ENCODE measurements at regions of chr1 and their contacts with region 1.

Region 1: DNA sequence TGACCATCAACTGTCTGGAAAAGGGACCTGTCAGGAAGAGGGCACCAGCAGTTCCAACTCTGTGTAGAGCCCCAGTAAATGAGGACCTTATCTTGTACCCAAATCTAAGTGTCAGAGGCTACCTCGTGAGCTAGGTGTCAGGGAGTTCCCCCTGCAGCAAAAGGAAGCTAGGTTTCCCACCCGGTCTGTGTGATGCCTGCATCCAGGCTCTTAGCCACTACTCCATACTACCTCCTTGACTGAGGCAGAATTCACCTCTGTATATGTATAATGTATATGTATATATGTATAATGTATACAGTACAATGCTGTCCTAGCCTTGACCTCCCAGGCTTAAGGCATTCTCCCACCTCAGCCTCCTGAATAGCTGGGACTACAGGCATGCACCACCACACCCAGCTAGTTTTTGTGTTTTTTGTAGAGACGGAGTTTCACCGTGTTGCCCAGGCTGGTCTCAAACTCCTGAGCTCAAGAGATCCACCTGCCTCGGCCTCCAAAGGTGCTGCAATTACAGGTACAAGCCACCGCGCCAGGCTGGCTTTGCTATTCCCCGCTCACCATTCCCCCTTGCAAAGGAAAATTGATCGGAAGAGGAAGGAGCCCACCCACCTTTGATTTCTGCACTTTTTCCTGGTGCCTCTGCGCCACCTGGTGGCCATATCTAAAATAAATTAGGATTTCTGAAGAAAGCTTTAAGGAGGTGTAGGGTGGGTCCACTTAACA is 15.7 kb upstream of the LUZP1 start:
- DNase-seq: peak; percentile 34 to 82
- ATAC-seq: peak; percentile 45 to 59 (median 52)
- H3K4me3 ChIP-seq: no peak overlapping the region
- H3K4me3 Mint-ChIP-seq: peak overlapping the region; percentile 70
- H3K27ac ChIP-seq: no peak overlapping the region
- H3K27ac Mint-ChIP-seq: peak overlapping the region; percentile 2 to 69
- H3K4me1 ChIP-seq: peaks cover 11% of the 10 kb centered on the region
- H3K4me1 Mint-ChIP-seq: peaks cover 4 to 11% of the 10 kb centered on the region in 2 donors
- H3K27me3 ChIP-seq: no peaks in the 10 kb centered on the region
- H3K27me3 Mint-ChIP-seq: no peaks in the 10 kb centered on the region
- CTCF ChIP-seq: peak; percentile 93

Region 2: DNA sequence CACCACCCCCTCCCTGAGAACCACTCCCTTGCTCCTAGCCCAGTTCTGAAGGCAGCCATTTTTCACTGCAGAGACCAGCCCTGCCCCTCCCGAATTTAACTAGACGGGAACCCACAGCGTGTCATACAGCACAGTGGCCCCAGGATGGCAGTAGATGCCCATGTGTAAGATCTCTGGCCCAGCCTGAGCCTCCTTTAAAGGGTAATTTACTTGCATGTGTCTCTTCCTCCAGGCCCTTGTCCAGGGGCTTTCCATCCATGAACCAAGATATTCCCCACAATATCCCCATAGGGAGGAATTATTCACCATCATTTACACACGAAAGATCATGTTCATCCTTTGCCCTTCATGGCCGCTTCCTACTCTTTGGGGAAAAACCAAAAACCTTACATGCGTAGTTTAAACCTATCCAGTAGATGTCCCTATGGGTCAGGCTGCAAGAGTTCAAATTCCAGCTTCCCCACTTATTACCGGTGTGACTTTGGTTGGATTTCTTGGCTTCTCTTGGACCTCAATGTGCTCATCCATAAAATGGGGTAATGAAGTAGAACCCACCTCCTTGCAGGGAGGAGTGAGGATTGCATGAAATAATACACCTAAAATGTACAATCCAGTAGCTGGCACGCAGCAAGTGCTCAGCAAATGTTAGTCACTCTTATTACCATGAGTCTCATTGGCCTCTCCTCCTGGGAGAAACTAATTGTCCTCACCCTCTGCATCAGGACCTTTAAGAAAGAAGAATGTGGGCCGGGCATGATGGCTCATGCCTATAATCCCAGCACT is 207.7 kb before region 1 on chr1:
- intact Hi-C with region 1: loop called (anchors 1 kb)
- DNase-seq: peak; percentile 35 to 69
- ATAC-seq: peak; percentile 72 to 98 (median 96)
- H3K4me3 ChIP-seq: no peak overlapping the region
- H3K4me3 Mint-ChIP-seq: no peak overlapping the region
- H3K27ac ChIP-seq: no peak overlapping the region
- H3K27ac Mint-ChIP-seq: no peak overlapping the region
- H3K4me1 ChIP-seq: no peaks in the 10 kb centered on the region
- H3K4me1 Mint-ChIP-seq: no peaks in the 10 kb centered on the region
- H3K27me3 ChIP-seq: peaks cover 2% of the 10 kb centered on the region
- H3K27me3 Mint-ChIP-seq: peaks cover 15 to 28% of the 10 kb centered on the region in 2 donors
- CTCF ChIP-seq: no peak

Region 3: DNA sequence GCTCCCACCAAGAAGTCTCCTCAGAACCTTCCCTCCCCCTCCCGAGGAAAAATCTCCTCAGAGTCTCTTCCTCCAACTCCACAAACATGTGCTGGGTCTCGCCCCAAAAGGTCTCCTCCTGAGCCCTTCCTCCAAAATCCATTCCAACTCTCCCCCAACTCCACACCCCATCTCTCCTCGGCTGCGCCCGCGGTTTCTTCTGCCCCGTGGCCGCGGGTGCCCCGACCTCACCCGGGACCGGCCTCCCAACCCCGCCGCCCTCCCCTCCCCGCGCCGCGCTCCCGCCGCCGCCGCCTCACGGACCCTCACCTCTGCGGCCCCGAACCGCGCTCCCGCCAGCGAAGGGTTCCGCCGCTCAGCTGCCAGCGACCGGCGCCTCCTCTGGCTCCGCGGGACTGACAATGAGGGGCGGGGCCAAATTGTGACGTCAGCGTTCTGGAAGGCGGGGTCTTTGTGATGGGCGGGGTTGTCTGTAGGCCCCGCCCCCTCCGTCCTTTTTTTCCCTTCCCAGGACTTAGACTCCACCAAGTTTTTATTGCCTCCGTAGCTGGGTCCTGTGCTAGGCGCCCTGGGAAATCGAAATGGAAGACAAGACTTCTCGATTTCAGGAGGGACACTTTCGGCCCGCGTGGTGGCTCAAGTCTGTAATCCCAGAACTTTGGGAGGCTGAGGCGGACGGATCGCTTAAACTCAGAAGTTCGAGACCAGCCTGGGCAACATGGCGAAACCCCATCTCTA is 15.7 kb before region 1 on chr1 and contains the start of gene LUZP1:
- intact Hi-C with region 1: loop called (anchors 2 kb)
- DNase-seq: peak; percentile 87 to 90
- ATAC-seq: peak; percentile 90 to 94 (median 92)
- H3K4me3 ChIP-seq: peak within 1 kb of the TSS; percentile 91
- H3K4me3 Mint-ChIP-seq: peak within 1 kb of the TSS; percentile 97
- H3K27ac ChIP-seq: peak within 1 kb of the TSS; percentile 63
- H3K27ac Mint-ChIP-seq: peak within 1 kb of the TSS; percentile 84 to 97
- H3K4me1 ChIP-seq: peaks cover 18% of the 10 kb centered on the region
- H3K4me1 Mint-ChIP-seq: peaks cover 42 to 52% of the 10 kb centered on the region in 2 donors
- H3K27me3 ChIP-seq: no peaks in the 10 kb centered on the region
- H3K27me3 Mint-ChIP-seq: no peaks in the 10 kb centered on the region
- CTCF ChIP-seq: no peak
- total RNA-seq, gene LUZP1: 37.0 to 49.4 (median 39.6) TPM